OCI-LY7 (cell line): ENCODE measurements at regions of chr6 and their contacts with region 1.

Region 1: GRCh38 chr6:116279260-116280063 is at the start of gene TSPYL1:
- DNase-seq: peak; percentile 97
- H3K4me3 ChIP-seq: peak within 1 kb of the TSS; percentile 86
- H3K27ac ChIP-seq: peak within 1 kb of the TSS; percentile 78
- H3K4me1 ChIP-seq: peaks cover 68% of the 10 kb centered on the region
- CTCF ChIP-seq: peak; percentile 43
- total RNA-seq, gene TSPYL1: 32.8 and 33.3 TPM in 2 replicates

Region 2: GRCh38 chr6:116057766-116058165 is 221.7 kb before region 1 on chr6:
- CTCF ChIA-PET with region 1: no interaction called
- POLR2A ChIA-PET with region 1: no interaction called
- intact Hi-C with region 1: no loop called
- DNase-seq: no peak
- H3K4me3 ChIP-seq: no peak overlapping the region
- H3K27ac ChIP-seq: no peak overlapping the region
- H3K4me1 ChIP-seq: no peaks in the 10 kb centered on the region
- CTCF ChIP-seq: no peak

Region 3: DNA sequence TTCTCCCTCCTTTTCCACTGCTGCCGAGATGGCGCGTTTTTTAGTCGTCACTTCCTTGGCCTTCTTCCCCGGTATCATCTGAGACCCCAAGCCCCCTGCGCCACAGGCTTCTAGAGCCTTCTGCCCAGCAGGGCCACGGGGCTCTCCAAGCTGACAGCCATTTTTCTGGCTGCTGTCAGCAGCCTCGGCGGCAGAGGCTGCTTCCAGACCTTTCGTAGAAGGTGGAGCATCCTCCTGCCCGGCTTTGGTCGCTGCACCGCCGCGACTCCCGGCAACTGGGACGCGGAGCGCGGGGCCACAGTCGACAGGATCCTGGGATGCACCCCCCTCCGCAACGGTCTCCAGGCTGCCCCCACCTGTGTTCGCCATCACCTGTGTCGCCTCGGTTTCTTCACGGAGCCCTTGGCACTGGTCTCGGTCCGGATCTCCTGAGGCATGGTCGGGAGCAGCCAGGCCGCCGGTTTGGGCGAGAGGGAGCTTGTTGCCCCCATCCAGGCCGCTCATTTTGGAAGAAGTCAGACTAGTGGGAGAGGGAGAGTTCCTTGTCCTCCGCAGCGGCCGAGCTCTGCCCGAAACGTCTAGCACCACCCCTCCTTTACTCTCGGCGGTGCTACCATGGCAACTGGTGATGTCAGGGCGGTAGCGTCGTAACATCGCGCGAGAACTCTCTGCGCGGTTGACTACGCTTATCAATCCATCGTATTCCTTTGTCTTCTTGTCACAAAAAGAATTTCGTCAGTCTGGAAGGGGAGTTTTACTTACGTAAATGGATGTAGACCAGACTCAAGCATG is 25.8 kb before region 1 on chr6 and contains the start of gene TSPYL4:
- CTCF ChIA-PET with region 1: no interaction called
- POLR2A ChIA-PET with region 1: interaction called, 9 read pairs
- intact Hi-C with region 1: loop called (anchors 2 kb)
- DNase-seq: peak; percentile 86
- H3K4me3 ChIP-seq: peak within 1 kb of the TSS; percentile 77
- H3K27ac ChIP-seq: peak within 1 kb of the TSS; percentile 19
- H3K4me1 ChIP-seq: peaks cover 26% of the 10 kb centered on the region
- CTCF ChIP-seq: no peak
- total RNA-seq, gene TSPYL4: 12.6 and 14.8 TPM in 2 replicates

Region 4: DNA sequence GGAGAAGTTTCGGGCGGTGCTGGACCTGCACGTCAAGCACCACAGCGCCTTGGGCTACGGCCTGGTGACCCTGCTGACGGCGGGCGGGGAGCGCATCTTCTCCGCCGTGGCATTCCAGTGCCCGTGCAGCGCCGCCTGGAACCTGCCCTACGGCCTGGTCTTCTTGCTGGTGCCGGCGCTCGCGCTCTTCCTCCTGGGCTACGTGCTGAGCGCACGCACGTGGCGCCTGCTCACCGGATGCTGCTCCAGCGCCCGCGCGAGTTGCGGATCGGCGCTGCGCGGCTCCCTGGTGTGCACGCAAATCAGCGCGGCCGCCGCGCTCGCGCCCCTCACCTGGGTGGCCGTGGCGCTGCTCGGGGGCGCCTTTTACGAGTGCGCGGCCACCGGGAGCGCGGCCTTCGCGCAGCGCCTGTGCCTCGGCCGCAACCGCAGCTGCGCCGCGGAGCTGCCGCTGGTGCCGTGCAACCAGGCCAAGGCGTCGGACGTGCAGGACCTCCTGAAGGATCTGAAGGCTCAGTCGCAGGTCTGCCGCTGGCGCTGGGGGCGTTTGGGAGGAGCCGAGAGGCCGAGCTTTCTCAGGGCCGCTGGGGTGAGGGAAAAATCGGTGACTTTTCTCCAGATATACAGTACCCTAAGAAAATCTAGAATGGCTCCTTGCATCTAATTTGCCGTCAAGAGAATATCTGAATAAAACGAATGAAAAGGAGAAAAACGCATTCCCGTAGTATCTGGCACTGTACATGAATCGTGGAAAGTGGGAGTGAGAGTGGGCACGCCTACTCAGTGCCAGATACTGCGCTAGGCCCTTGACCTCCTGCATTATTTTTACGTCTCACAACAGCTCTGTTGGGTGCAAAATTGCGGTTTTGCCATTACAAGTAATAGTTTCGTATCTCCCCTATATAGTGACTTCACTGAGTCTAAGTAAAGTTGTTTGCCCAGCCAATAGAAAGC is 182.7 kb after region 1 on chr6:
- CTCF ChIA-PET with region 1: no interaction called
- POLR2A ChIA-PET with region 1: no interaction called
- intact Hi-C with region 1: loop called (anchors 5 kb)
- DNase-seq: no peak
- H3K4me3 ChIP-seq: no peak overlapping the region
- H3K27ac ChIP-seq: no peak overlapping the region
- H3K4me1 ChIP-seq: peaks cover 5% of the 10 kb centered on the region
- CTCF ChIP-seq: no peak

Region 5: DNA sequence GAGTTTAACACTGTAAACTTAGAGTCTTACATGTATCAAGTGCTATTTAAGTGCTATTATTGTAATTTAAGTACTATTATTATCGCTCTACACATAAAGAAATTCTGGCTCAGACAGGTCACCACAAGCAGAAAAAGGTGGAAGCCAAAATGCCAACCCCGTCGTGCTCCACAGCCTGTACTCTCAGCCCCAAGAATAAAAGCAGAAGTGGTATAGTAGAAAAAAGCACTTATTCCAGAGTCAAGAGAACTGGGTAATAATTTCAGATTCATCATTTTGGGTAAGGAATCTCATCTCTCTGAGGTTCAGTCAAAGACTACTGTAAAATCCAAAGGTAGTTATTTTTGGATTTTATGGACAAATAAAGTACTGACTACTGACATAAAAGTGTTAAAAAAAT is 388.2 kb after region 1 on chr6:
- CTCF ChIA-PET with region 1: no interaction called
- POLR2A ChIA-PET with region 1: no interaction called
- intact Hi-C with region 1: loop called (anchors 10 kb)
- DNase-seq: peak; percentile 61
- H3K4me3 ChIP-seq: peak overlapping the region; percentile 79
- H3K27ac ChIP-seq: peak overlapping the region; percentile 45
- H3K4me1 ChIP-seq: peaks cover 26% of the 10 kb centered on the region
- CTCF ChIP-seq: no peak

Region 6: GRCh38 chr6:116945809-116946208 is 666.3 kb after region 1 on chr6:
- CTCF ChIA-PET with region 1: no interaction called
- POLR2A ChIA-PET with region 1: no interaction called
- intact Hi-C with region 1: no loop called
- DNase-seq: no peak
- H3K4me3 ChIP-seq: no peak overlapping the region
- H3K27ac ChIP-seq: no peak overlapping the region
- H3K4me1 ChIP-seq: no peaks in the 10 kb centered on the region
- CTCF ChIP-seq: no peak